Activated naive CD4-positive, alpha-beta T cell treated with anti-CD3 and anti-CD28 coated beads for 36 hours (primary cell): ENCODE measurements at regions of chr6 and their contacts with region 1.

Region 1: GRCh38 chr6:15327271-15327670 is 81.4 kb downstream of the JARID2 start:
- DNase-seq: peak; percentile 79
- H3K4me3 Mint-ChIP-seq: no peak overlapping the region
- H3K27ac Mint-ChIP-seq: peak overlapping the region; percentile 85
- H3K4me1 Mint-ChIP-seq: peaks cover 88% of the 10 kb centered on the region
- H3K27me3 Mint-ChIP-seq: no peaks in the 10 kb centered on the region

Region 2: DNA sequence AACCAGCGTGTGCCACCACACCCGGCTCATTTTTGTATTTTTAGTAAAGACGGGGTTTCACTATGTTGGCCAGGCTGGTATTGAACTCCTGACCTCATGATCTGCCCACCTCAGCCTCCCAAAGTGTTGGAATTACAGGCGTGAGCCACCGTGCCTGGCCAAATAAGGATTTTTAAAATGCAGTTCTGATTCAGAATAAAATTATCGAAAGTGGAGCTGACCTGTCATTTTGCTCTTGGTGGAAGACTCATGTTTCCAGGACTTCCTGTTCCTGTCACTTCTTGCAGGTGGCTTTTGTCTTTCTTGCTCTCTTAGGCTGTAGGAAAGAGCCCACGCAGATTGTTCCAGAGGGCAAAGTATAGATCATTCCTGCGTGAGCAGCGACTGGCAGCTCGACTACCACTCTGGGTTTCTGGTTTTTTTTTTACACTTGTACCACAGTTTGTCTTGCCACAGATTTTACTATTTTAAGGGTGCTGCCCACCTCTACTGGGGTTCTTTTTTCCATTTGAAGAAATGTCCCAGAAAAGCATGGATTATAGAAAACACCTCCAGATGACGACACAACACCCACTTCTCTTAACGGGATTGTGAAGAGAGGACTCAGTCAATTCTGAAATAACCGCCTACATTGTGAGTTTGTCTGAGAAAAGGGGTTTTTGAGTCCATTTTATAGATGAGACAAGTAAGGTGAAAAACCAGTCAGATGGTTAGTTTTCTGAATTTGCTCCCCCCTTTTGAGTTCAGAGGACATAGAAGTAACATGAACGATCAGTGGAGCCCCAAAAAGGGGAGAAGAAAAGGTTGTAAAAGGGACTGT is 73.9 kb before region 1 on chr6:
- CTCF ChIA-PET with region 1: interaction called, 3 read pairs
- intact Hi-C with region 1: loop called (anchors 1 kb)
- DNase-seq: peak; percentile 45
- H3K4me3 Mint-ChIP-seq: peak overlapping the region; percentile 62
- H3K27ac Mint-ChIP-seq: peak overlapping the region; percentile 89
- H3K4me1 Mint-ChIP-seq: peaks cover 92% of the 10 kb centered on the region
- H3K27me3 Mint-ChIP-seq: no peaks in the 10 kb centered on the region

Region 3: GRCh38 chr6:15363523-15364400 is 36.5 kb after region 1 on chr6:
- CTCF ChIA-PET with region 1: no interaction called
- intact Hi-C with region 1: loop called (anchors 5 kb)
- DNase-seq: peak; percentile 17
- H3K4me3 Mint-ChIP-seq: no peak overlapping the region
- H3K27ac Mint-ChIP-seq: no peak overlapping the region
- H3K4me1 Mint-ChIP-seq: peaks cover 43% of the 10 kb centered on the region
- H3K27me3 Mint-ChIP-seq: no peaks in the 10 kb centered on the region

Region 4: DNA sequence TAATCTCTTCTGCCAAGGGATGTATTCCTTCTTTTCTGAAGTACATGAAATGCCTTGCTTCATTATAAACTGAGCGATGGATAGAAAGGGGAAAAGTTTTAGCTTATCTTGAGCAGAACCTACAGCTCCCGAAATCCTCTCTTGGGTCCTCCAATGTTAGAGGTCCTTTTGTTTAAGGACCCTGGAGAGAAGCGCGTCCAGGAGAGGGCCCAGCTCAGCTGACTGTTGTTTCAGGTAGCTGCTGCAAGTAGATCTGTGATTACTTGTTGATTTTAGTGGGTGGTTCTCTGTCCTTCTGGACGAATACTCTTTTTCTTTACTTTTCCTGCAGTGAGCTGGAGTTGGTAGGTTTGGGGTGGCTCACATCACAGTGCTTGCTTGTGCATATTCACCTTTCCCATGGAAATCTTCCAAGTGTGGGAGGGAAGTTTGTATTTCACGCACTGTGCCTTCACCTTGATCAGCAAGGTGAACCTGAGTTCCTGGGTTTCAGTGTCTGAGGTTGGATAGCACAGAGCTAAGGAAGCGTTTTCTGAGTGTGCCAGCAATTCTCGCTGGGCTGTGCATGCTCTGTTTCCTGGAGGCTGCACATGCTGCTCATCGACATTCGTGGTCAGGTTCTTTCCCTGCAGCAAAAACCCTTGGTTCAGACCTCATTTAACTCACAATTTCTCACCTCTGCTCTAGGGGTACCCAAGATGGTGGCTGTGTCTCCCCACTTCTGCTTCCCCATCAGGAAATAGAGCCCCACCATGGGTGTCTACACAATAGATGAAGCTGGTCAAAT is 94.9 kb after region 1 on chr6:
- CTCF ChIA-PET with region 1: no interaction called
- intact Hi-C with region 1: loop called (anchors 1 kb)
- DNase-seq: peak; percentile 74
- H3K4me3 Mint-ChIP-seq: peak overlapping the region; percentile 15
- H3K27ac Mint-ChIP-seq: peak overlapping the region; percentile 55
- H3K4me1 Mint-ChIP-seq: peaks cover 64% of the 10 kb centered on the region
- H3K27me3 Mint-ChIP-seq: no peaks in the 10 kb centered on the region

Region 5: DNA sequence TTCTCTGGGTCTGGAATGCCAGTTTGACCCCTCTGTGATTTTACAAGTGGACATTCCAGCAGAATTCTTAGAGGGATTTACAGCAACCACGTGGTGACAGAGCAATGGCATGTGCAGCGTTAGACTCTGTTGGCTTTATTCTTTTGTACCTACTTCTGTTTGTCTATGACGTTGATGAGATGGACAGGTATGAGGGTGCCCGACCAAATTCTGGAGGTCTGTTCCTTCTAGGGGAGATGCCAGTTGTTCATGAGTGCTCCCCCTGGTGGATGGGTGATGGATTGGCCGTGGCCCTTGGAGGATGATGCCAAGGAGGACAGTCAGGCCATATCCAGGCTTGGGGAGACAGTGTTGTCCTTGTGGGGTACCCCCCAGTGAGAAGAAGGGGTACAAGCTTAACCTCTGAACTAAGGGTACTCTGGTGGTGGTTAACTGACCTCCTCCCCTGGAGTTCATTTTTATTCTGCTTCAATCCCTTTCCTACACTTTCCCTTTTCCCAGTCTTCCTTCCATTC is 137.0 kb after region 1 on chr6:
- CTCF ChIA-PET with region 1: no interaction called
- intact Hi-C with region 1: loop called (anchors 1 kb)
- DNase-seq: peak; percentile 62
- H3K4me3 Mint-ChIP-seq: no peak overlapping the region
- H3K27ac Mint-ChIP-seq: no peak overlapping the region
- H3K4me1 Mint-ChIP-seq: peaks cover 50% of the 10 kb centered on the region
- H3K27me3 Mint-ChIP-seq: no peaks in the 10 kb centered on the region

Region 6: GRCh38 chr6:15621203-15622044 is 294.2 kb after region 1 on chr6:
- CTCF ChIA-PET with region 1: no interaction called
- intact Hi-C with region 1: loop called (anchors 10 kb)
- DNase-seq: no peak
- H3K4me3 Mint-ChIP-seq: no peak overlapping the region
- H3K27ac Mint-ChIP-seq: no peak overlapping the region
- H3K4me1 Mint-ChIP-seq: peaks cover 24% of the 10 kb centered on the region
- H3K27me3 Mint-ChIP-seq: no peaks in the 10 kb centered on the region